HCT116 (cell line): ENCODE measurements at regions of chr7 and their contacts with region 1.

Region 1: GRCh38 chr7:132709971-132710567 is 133.8 kb upstream of the PLXNA4 start:
- DNase-seq: peak; percentile 24
- ATAC-seq: peak; percentile 88
- H3K4me3 ChIP-seq: no peak overlapping the region
- H3K27ac ChIP-seq: no peak overlapping the region
- H3K4me1 ChIP-seq: no peaks in the 10 kb centered on the region
- H3K27me3 ChIP-seq: no peaks in the 10 kb centered on the region
- CTCF ChIP-seq: peak; percentile 66 to 72 (median 68)
- POLR2A ChIP-seq: no peak
- RAD21 ChIP-seq: peak; percentile 67

Region 2: GRCh38 chr7:133230591-133231194 is 520.6 kb after region 1 on chr7:
- CTCF ChIA-PET with region 1: interaction called, 3 read pairs
- POLR2A ChIA-PET with region 1: no interaction called
- RAD21 ChIA-PET with region 1: no interaction called
- intact Hi-C with region 1: loop called (anchors 2 kb)
- DNase-seq: peak; percentile 39
- ATAC-seq: peak; percentile 78
- H3K4me3 ChIP-seq: no peak overlapping the region
- H3K27ac ChIP-seq: no peak overlapping the region
- H3K4me1 ChIP-seq: no peaks in the 10 kb centered on the region
- H3K27me3 ChIP-seq: no peaks in the 10 kb centered on the region; the same call in 1 of the 2 replicates
- CTCF ChIP-seq: peak; percentile 41 to 76 (median 71); a peak in 5 of 6 replicates
- POLR2A ChIP-seq: no peak
- RAD21 ChIP-seq: peak; percentile 66

Region 3: GRCh38 chr7:133344275-133344674 is 634.2 kb after region 1 on chr7:
- CTCF ChIA-PET with region 1: interaction called, 13 read pairs
- POLR2A ChIA-PET with region 1: no interaction called
- RAD21 ChIA-PET with region 1: no interaction called
- intact Hi-C with region 1: loop called (anchors 5 kb)
- DNase-seq: no peak
- ATAC-seq: no peak
- H3K4me3 ChIP-seq: no peak overlapping the region
- H3K27ac ChIP-seq: no peak overlapping the region
- H3K4me1 ChIP-seq: no peaks in the 10 kb centered on the region
- H3K27me3 ChIP-seq: no peaks in the 10 kb centered on the region
- CTCF ChIP-seq: peak; percentile 27 to 57 (median 35); a peak in 4 of 6 replicates
- POLR2A ChIP-seq: no peak
- RAD21 ChIP-seq: peak; percentile 53

Region 4: GRCh38 chr7:133434055-133434865 is 724.2 kb after region 1 on chr7:
- CTCF ChIA-PET with region 1: interaction called, 18 read pairs
- POLR2A ChIA-PET with region 1: no interaction called
- RAD21 ChIA-PET with region 1: no interaction called
- intact Hi-C with region 1: loop called (anchors 2 kb)
- DNase-seq: no peak
- ATAC-seq: no peak
- H3K4me3 ChIP-seq: no peak overlapping the region
- H3K27ac ChIP-seq: no peak overlapping the region
- H3K4me1 ChIP-seq: no peaks in the 10 kb centered on the region
- H3K27me3 ChIP-seq: no peaks in the 10 kb centered on the region
- CTCF ChIP-seq: peak in 2 of 3 experiments; percentile 20 to 41; a peak in 2 of 6 replicates
- POLR2A ChIP-seq: no peak
- RAD21 ChIP-seq: peak; percentile 61

Region 5: GRCh38 chr7:134016223-134016941 is 1306.3 kb after region 1 on chr7:
- CTCF ChIA-PET with region 1: no interaction called
- POLR2A ChIA-PET with region 1: no interaction called
- RAD21 ChIA-PET with region 1: no interaction called
- intact Hi-C with region 1: loop called (anchors 10 kb)
- DNase-seq: peak; percentile 12
- ATAC-seq: peak; percentile 66
- H3K4me3 ChIP-seq: no peak overlapping the region
- H3K27ac ChIP-seq: no peak overlapping the region
- H3K4me1 ChIP-seq: no peaks in the 10 kb centered on the region
- H3K27me3 ChIP-seq: no peaks in the 10 kb centered on the region
- CTCF ChIP-seq: peak; percentile 41 to 79 (median 76); a peak in 5 of 6 replicates
- POLR2A ChIP-seq: no peak
- RAD21 ChIP-seq: peak; percentile 71

Region 6: DNA sequence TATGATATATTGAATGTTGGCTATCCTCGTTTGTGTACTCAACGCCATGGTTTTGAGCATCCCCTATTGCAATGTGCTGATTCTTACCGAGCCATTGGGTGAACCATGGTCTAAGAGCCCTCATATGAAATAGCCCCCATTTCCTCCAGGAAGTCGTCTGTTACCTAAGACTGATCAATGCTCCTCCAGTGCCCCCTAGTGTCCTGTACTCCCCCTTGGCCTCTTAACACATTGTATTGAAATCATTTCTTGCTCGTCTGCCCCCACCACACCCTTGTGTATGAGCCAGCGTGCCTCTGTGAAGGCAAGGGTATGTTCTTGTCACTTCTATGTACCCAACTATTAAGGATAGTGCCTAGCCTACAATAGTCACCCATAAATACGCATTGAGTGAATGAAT is 1617.8 kb after region 1 on chr7:
- CTCF ChIA-PET with region 1: no interaction called
- POLR2A ChIA-PET with region 1: no interaction called
- RAD21 ChIA-PET with region 1: no interaction called
- intact Hi-C with region 1: loop called (anchors 10 kb)
- DNase-seq: peak; percentile 75
- ATAC-seq: peak; percentile 98
- H3K4me3 ChIP-seq: no peak overlapping the region
- H3K27ac ChIP-seq: no peak overlapping the region
- H3K4me1 ChIP-seq: no peaks in the 10 kb centered on the region
- H3K27me3 ChIP-seq: no peaks in the 10 kb centered on the region
- CTCF ChIP-seq: peak; percentile 51 to 67 (median 67); a peak in 5 of 6 replicates
- POLR2A ChIP-seq: no peak
- RAD21 ChIP-seq: peak; percentile 79

Region 7: DNA sequence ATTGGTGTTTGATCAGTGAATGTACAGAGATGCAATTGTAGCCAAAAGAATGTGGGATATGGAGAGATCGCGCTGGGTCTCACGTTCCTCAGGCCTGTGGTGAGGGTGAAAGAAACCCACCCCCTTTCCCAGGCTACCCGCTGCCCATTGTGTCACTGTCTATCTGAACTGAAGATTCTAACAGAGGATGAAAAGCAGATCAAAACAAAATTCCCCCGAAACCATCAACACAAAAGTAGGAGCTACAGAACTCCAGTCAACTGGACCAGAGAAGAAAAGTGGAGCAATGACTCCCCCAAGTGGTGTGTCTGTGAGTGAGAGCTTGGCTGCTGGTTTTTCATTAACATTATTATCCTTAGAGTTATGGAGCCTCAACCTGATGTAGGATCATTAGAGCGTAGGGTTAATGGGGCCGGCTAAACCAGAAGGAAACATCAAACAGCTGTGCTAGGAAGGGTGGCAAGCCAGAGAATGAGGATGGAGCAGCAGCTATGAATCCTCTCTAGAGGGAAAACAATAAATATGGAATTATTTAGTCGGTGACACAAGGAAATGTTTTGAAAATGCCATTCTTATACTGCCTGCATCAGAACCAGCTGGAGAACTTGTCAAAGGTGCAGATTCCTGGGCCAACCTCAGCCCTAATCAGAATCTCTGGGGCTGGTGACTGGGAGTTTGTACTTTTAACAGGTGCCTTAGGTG is 1710.5 kb after region 1 on chr7:
- CTCF ChIA-PET with region 1: interaction called, 5 read pairs
- POLR2A ChIA-PET with region 1: no interaction called
- RAD21 ChIA-PET with region 1: no interaction called
- intact Hi-C with region 1: loop called (anchors 10 kb)
- DNase-seq: peak; percentile 23
- ATAC-seq: peak; percentile 86
- H3K4me3 ChIP-seq: no peak overlapping the region
- H3K27ac ChIP-seq: no peak overlapping the region
- H3K4me1 ChIP-seq: peaks cover 7 to 15% of the 10 kb centered on the region in 2 experiments
- H3K27me3 ChIP-seq: no peaks in the 10 kb centered on the region
- CTCF ChIP-seq: peak; percentile 58 to 72 (median 64); a peak in 5 of 6 replicates
- POLR2A ChIP-seq: no peak
- RAD21 ChIP-seq: peak; percentile 83